A673 (cell line): ENCODE measurements at regions of chr12 and their contacts with region 1.

Region 1: GRCh38 chr12:56315622-56316473 is at the start of gene CNPY2:
- DNase-seq: peak; percentile 98
- H3K4me3 ChIP-seq: peak within 1 kb of the TSS; percentile 70
- H3K27ac ChIP-seq: peak within 1 kb of the TSS; percentile 93
- H3K4me1 ChIP-seq: peaks cover 8% of the 10 kb centered on the region
- H3K27me3 ChIP-seq: no peaks in the 10 kb centered on the region
- CTCF ChIP-seq: no peak
- total RNA-seq, gene CNPY2: 162 and 166 TPM in 2 replicates

Region 2: DNA sequence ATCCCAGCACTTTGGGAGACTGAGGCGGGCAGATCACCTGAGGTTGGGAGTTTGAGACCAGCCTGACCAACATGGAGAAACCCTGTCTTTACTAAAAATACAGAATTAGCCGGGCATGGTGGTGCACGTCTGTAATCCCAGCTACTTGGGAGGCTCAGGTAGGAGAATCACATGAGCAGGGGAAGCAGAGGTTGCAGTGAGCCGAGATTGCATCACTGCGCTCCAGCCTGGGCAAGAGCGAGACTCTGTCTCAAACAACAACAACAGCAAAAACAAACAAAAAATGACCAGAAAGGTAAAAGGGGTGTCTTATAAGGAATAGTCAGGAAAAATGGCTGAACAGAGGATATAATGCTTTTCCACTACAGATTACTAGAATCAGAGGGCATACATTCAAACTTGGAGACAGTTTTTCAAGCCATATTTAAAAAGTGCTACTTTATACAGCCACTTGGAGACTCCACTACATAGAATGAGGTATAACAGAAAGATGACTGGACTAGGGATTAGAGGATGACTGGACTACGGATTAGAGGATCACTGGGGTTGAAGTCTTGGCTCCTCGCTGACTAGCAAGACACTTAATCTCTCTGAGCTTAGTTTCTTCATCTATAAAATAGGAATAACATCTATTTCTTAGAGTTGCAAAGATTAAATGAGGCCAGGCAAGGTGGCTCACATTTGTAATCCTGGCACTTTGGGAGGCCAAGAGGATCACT is 10.8 kb before region 1 on chr12:
- CTCF ChIA-PET with region 1: interaction called, 10 read pairs
- POLR2A ChIA-PET with region 1: interaction called, 4 read pairs
- intact Hi-C with region 1: no loop called
- DNase-seq: no peak
- H3K4me3 ChIP-seq: no peak overlapping the region
- H3K27ac ChIP-seq: no peak overlapping the region
- H3K4me1 ChIP-seq: peaks cover 8% of the 10 kb centered on the region
- H3K27me3 ChIP-seq: no peaks in the 10 kb centered on the region
- CTCF ChIP-seq: no peak

Region 3: DNA sequence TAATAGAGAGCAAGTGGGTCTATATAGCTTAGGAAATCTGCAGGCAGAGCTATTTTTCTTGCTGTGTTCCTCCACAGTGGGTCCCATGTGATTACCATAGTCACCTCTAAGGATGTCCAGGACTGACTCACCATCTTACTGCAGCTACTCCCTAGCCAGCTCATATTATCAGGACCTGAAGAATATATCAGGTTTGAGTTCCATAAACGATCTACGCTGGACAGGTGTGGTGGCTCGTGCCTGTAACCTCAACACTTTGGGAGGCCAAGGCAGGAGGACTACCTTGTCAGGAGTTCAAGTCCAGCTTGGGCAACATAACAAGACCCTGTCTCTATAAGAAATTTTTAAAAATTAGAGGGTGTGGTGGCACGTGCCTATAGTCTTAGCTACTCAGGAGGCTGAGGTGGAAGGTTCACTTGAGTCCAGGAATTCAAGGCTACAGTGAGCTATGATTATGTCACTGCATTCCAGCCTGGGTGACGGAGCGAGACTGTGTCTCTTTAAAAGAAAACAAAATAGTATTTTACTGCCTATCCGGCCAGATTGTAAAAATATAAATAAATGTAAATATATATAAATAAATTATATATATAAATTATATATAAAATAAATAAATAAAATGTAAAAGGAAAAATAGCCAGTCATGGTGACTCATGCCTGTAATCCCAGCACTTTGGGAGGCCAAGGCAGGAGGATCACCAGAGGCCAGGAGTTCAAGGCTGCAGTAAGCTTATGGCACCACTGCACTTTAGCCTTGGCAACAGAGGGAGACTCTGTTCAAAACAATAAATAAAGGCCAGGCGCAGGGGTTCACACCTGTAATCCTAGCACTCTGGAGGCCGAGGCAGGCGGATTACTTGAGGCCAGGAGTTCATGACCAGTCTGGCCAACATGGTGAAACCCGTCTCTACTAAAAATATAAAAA is 145.6 kb after region 1 on chr12:
- CTCF ChIA-PET with region 1: interaction called, 14 read pairs
- POLR2A ChIA-PET with region 1: no interaction called
- intact Hi-C with region 1: loop called (anchors 5 kb)
- DNase-seq: no peak
- H3K4me3 ChIP-seq: no peak overlapping the region
- H3K27ac ChIP-seq: no peak overlapping the region
- H3K4me1 ChIP-seq: no peaks in the 10 kb centered on the region
- H3K27me3 ChIP-seq: no peaks in the 10 kb centered on the region
- CTCF ChIP-seq: no peak

Region 4: DNA sequence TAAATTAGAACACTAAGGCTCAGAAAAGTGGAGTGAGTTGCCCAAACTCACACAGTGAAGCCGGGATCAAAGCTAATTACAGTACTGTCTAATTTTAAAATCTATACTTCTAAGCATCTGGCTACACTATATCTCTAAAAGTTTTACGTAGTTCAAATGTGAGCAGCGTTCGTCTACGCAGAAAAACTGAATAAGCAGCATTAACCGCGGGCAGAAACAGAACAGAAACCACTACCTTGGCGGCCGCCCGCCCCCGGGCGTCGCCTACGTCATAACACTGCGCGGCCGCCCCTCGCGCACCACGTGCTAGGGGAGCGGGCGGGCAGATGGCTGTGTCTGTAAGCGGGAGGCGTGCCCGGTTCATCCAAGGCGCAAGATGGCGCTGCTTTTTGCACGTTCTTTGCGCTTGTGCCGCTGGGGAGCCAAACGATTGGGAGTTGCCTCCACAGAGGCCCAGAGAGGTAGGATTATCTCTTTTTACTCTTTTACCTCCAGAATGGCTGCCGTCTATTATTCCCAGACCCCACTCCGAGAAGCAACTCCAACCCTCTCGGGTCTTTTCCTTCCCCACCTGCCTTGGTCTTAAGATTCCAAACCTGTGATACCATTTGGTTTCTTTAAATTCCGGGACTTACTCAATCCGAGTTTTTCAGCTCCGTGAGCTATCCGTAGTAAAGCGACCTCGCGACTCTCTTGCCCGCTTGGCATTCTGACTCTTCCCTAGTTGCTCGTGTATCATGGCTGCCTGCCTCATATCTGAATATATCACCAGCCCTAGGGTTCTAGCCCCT is 152.6 kb after region 1 on chr12 and contains the start of gene SPRYD4:
- CTCF ChIA-PET with region 1: interaction called, 14 read pairs
- POLR2A ChIA-PET with region 1: no interaction called
- intact Hi-C with region 1: loop called (anchors 5 kb)
- DNase-seq: peak; percentile 96
- H3K4me3 ChIP-seq: peak within 1 kb of the TSS; percentile 76
- H3K27ac ChIP-seq: peak within 1 kb of the TSS; percentile 94
- H3K4me1 ChIP-seq: peaks cover 7% of the 10 kb centered on the region
- H3K27me3 ChIP-seq: no peaks in the 10 kb centered on the region
- CTCF ChIP-seq: peak; percentile 60
- total RNA-seq, gene SPRYD4: 4.7 and 5.1 TPM in 2 replicates